Left ventricle myocardium superior (tissue), 1 donor: ENCODE measurements at regions of chr1 and their contacts with region 1.

Region 1: DNA sequence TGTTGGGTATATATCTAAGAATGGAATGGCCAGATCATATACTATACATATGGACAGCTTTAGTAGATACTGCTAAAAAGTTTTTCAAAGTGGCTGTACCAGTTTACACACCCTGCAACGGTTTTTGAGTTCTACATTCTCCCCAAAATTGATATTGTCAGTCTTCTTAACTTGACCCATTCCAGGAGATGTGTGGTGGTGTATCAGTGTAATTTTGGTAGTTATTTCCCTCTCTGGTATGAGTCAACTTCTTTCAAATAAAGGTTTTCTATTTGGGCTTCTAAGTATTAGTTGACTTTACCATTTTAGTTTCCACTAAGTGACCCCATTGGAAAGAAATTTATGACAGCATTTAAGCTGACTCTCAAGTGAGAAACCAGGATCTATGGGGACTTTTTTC is 29.2 kb downstream of the INKA2 start:
- DNase-seq: no peak
- ATAC-seq: no peak

Region 2: GRCh38 chr1:111747282-111747734 is 37.3 kb after region 1 on chr1:
- intact Hi-C with region 1: loop called (anchors 5 kb)
- DNase-seq: no peak
- ATAC-seq: peak; percentile 48